ENCODE measurements at regions of chr9 and their contacts with region 1.

Region 1: GRCh38 chr9:108272349-108272899 is 583.4 kb downstream of the ACTL7B start:
- DNase-seq: peak; percentile 54 to 72
- H3K4me3 ChIP-seq: peak overlapping the region; percentile 47; the same call in 1 of the 2 replicates
- H3K27ac ChIP-seq: peak overlapping the region; percentile 96
- H3K4me1 ChIP-seq: peaks cover 43% of the 10 kb centered on the region
- H3K27me3 ChIP-seq: no peaks in the 10 kb centered on the region
- CTCF ChIP-seq: peak; percentile 71

Region 2: DNA sequence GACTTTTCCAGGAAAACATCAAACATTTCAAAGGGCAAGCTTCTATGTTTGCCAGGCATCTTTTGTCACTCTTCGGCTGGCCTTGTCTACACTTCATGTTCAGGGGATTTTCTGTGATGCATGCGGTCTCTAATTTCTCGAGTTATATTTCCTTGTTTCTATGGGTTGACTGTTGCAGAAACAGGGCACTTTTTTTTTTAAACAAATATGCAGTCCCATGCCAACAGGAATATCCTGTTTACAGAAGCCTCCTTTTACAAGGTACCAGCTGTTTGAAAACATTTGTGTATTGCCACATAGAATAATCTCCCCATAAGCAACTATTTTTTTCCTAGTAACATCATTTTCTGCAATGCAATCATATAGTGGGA is 839.7 kb before region 1 on chr9:
- CTCF ChIA-PET with region 1: no interaction called
- POLR2A ChIA-PET with region 1: no interaction called
- intact Hi-C with region 1: loop called (anchors 5 kb)
- DNase-seq: peak; percentile 16 to 89
- H3K4me3 ChIP-seq: no peak overlapping the region
- H3K27ac ChIP-seq: no peak overlapping the region
- H3K4me1 ChIP-seq: peaks cover 13% of the 10 kb centered on the region
- H3K27me3 ChIP-seq: no peaks in the 10 kb centered on the region
- CTCF ChIP-seq: no peak

Region 3: DNA sequence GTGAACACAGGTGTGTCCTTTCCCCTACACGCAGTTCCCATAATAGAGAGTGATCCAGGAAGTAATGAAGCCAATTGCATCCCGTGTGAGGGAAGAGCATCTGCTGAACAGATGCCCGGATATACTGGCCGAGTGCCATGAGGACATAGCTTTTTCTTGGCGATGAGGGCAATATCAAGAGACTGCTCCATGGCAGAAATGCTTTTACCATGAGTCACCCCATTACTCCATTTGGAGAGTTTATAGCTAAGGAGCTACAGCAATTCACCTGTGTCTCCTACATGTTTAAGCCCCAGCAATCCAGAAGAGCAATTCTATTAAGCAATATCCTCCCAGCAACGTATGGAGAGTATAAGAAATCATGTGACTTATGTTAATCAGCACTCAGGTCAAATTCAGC is 560.9 kb before region 1 on chr9:
- CTCF ChIA-PET with region 1: no interaction called
- POLR2A ChIA-PET with region 1: no interaction called
- intact Hi-C with region 1: loop called (anchors 1 kb)
- DNase-seq: peak; percentile 80 to 92
- H3K4me3 ChIP-seq: no peak overlapping the region
- H3K27ac ChIP-seq: peak overlapping the region; percentile 79
- H3K4me1 ChIP-seq: peaks cover 28% of the 10 kb centered on the region
- H3K27me3 ChIP-seq: no peaks in the 10 kb centered on the region
- CTCF ChIP-seq: no peak

Region 4: DNA sequence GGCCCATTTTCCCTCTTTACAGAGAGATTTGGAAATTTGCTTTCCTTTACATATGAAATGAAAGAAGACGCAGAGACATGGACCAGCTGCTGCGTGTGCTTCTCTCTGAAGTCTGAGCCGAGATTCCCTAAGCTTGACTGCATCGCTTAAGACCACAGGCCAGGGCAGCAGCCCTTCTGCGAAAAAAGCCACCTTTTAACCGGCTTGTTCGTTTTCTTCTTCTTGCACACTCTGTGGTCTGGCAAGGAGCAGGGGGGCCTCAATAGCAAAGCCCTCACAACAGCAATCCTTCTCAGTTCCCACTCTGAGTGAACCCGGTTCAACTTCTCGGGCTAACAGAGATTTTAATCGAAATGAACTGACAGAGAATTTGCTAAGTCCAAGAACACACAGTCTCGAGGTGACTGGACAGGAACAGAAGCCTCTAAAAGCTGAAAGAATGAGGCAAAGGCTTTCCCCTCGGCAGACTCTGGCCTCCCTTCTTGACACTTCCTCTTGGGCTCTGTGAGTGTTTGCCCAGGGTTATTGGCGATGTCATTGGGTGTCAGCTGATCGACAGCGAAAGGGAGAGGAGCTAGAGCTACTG is 270.0 kb before region 1 on chr9:
- CTCF ChIA-PET with region 1: no interaction called
- POLR2A ChIA-PET with region 1: interaction called, 3 read pairs
- intact Hi-C with region 1: loop called (anchors 1 kb)
- DNase-seq: no peak
- H3K4me3 ChIP-seq: no peak overlapping the region
- H3K27ac ChIP-seq: no peak overlapping the region
- H3K4me1 ChIP-seq: no peaks in the 10 kb centered on the region
- H3K27me3 ChIP-seq: no peaks in the 10 kb centered on the region
- CTCF ChIP-seq: no peak

Region 5: GRCh38 chr9:108162664-108163063 is 109.8 kb before region 1 on chr9:
- CTCF ChIA-PET with region 1: no interaction called
- POLR2A ChIA-PET with region 1: no interaction called
- intact Hi-C with region 1: loop called (anchors 5 kb)
- DNase-seq: no peak
- H3K4me3 ChIP-seq: no peak overlapping the region
- H3K27ac ChIP-seq: no peak overlapping the region
- H3K4me1 ChIP-seq: peaks cover 20% of the 10 kb centered on the region
- H3K27me3 ChIP-seq: no peaks in the 10 kb centered on the region
- CTCF ChIP-seq: no peak

Region 6: DNA sequence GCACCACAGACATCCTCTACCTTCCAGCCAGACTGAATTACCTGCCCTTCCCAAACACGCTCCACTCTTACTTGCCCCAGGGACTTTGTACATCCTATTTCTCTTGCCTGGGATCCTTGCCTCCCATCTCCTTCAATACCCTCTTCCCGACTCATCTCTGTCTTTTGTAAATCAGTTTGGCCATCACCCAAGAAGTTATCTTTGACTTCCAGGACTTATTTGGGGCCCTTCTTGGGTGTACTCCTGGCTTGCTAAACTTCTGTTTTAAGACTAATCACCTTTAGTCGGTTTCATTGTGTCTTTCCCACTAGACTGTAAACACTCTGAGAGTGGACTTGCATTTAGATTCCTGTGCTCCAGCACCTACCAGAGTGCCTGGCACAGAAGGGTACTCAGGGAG is 37.8 kb after region 1 on chr9:
- CTCF ChIA-PET with region 1: no interaction called
- POLR2A ChIA-PET with region 1: no interaction called
- intact Hi-C with region 1: no loop called
- DNase-seq: no peak
- H3K4me3 ChIP-seq: no peak overlapping the region
- H3K27ac ChIP-seq: no peak overlapping the region
- H3K4me1 ChIP-seq: no peaks in the 10 kb centered on the region
- H3K27me3 ChIP-seq: no peaks in the 10 kb centered on the region
- CTCF ChIP-seq: no peak

Region 7: GRCh38 chr9:108322326-108323098 is 50.1 kb after region 1 on chr9:
- CTCF ChIA-PET with region 1: no interaction called
- POLR2A ChIA-PET with region 1: no interaction called
- intact Hi-C with region 1: no loop called
- DNase-seq: no peak
- H3K4me3 ChIP-seq: no peak overlapping the region
- H3K27ac ChIP-seq: no peak overlapping the region
- H3K4me1 ChIP-seq: no peaks in the 10 kb centered on the region
- H3K27me3 ChIP-seq: no peaks in the 10 kb centered on the region
- CTCF ChIP-seq: no peak

Region 8: DNA sequence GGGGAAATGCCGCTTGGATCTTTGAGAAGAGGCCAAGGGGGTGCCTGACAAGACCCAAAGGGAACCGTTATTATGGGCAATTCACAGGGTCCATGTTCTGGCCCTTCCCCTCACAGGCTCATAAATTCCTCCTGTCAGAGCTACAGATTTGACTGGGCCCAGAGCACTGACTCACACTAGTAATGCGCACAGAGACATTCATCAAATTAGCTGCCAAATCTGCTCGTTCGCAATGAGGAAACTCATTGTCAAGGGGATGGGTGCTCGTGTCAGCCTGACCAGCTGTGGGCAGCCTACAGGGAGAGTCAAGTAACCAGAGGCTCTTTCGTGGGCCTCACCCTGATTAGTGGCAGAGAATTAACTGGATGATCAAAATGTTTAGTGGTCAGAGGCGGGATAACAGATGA is 206.0 kb after region 1 on chr9:
- CTCF ChIA-PET with region 1: no interaction called
- POLR2A ChIA-PET with region 1: no interaction called
- intact Hi-C with region 1: loop called (anchors 2 kb)
- DNase-seq: peak; percentile 57 to 93
- H3K4me3 ChIP-seq: no peak overlapping the region
- H3K27ac ChIP-seq: peak overlapping the region; percentile 87
- H3K4me1 ChIP-seq: peaks cover 48% of the 10 kb centered on the region
- H3K27me3 ChIP-seq: no peaks in the 10 kb centered on the region
- CTCF ChIP-seq: no peak

Region 9: GRCh38 chr9:108761655-108762347 is 489.4 kb after region 1 on chr9:
- CTCF ChIA-PET with region 1: interaction called, 3 read pairs
- POLR2A ChIA-PET with region 1: no interaction called
- intact Hi-C with region 1: loop called (anchors 5 kb)
- DNase-seq: peak in 1 of 2 experiments; percentile 56
- H3K4me3 ChIP-seq: no peak overlapping the region
- H3K27ac ChIP-seq: no peak overlapping the region
- H3K4me1 ChIP-seq: no peaks in the 10 kb centered on the region
- H3K27me3 ChIP-seq: no peaks in the 10 kb centered on the region
- CTCF ChIP-seq: peak; percentile 92

Measured in PC-9 (cell line).